Gastrocnemius medialis (tissue), 4 donors: ENCODE measurements at regions of chr14 and their contacts with region 1.

Region 1: GRCh38 chr14:92783816-92784431 is 10.2 kb upstream of the GOLGA5 start:
- DNase-seq: no peak
- ATAC-seq: peak; percentile 52 to 81
- H3K4me3 ChIP-seq: no peak overlapping the region
- H3K27ac ChIP-seq: no peak overlapping the region
- H3K4me1 ChIP-seq: peaks cover 0 to 12% of the 10 kb centered on the region in 2 donors
- H3K27me3 ChIP-seq: no peaks in the 10 kb centered on the region
- CTCF ChIP-seq: peak; percentile 18 to 54 (median 50)
- POLR2A ChIP-seq: no peak

Region 2: GRCh38 chr14:92719890-92720323 is 64.0 kb before region 1 on chr14:
- in situ Hi-C with region 1: loop called (anchors 5 to 10 kb)
- intact Hi-C with region 1: no loop called
- DNase-seq: no peak
- ATAC-seq: peak; percentile 23 to 35
- H3K4me3 ChIP-seq: no peak overlapping the region
- H3K27ac ChIP-seq: peak overlapping the region in 3 of 4 donors; percentile 18 to 61 (median 42)
- H3K4me1 ChIP-seq: peaks cover 0 to 5% of the 10 kb centered on the region in 2 donors
- H3K27me3 ChIP-seq: no peaks in the 10 kb centered on the region
- CTCF ChIP-seq: no peak
- POLR2A ChIP-seq: no peak

Region 3: GRCh38 chr14:92737206-92737605 is 46.7 kb before region 1 on chr14:
- in situ Hi-C with region 1: no loop called
- intact Hi-C with region 1: no loop called
- DNase-seq: no peak
- ATAC-seq: no peak
- H3K4me3 ChIP-seq: no peak overlapping the region
- H3K27ac ChIP-seq: no peak overlapping the region
- H3K4me1 ChIP-seq: no peaks in the 10 kb centered on the region
- H3K27me3 ChIP-seq: no peaks in the 10 kb centered on the region
- CTCF ChIP-seq: no peak
- POLR2A ChIP-seq: no peak